Activated CD4-positive, alpha-beta memory T cell treated with anti-CD3 and anti-CD28 coated beads, Interleukin-2, amount 10 ng/mL, durations not matched to agents 7 days and 5 days (primary cell): ENCODE measurements at regions of chr17 and their contacts with region 1.

Region 1: GRCh38 chr17:28384281-28385036 is 13.0 kb downstream of the SARM1 start:
- DNase-seq: peak; percentile 80
- H3K4me3 Mint-ChIP-seq: peak overlapping the region; percentile 86
- H3K27ac Mint-ChIP-seq: peak overlapping the region; percentile 78
- H3K4me1 Mint-ChIP-seq: peaks cover 32% of the 10 kb centered on the region
- H3K27me3 Mint-ChIP-seq: no peaks in the 10 kb centered on the region

Region 2: DNA sequence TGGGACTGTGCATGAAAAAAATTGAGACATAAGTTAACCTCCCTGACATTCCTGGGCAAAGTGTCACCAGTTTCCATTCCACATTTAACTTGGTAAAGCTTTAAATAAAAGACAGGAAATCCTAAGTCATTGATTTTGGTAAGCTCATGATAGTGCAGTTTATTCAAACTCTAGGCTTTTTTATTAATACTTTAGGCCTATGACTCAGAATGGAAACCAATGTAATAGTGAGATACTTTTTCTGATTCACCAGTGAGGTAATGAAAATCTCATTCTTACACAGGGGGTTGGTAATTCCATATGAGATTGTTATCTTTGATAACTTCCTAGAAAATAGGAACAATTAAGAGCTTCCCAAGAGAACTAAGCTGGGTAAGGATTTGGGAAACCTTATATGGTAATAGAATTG is 250.9 kb before region 1 on chr17:
- CTCF ChIA-PET with region 1: no interaction called
- POLR2A ChIA-PET with region 1: no interaction called
- DNase-seq: no peak
- H3K4me3 Mint-ChIP-seq: no peak overlapping the region
- H3K27ac Mint-ChIP-seq: no peak overlapping the region
- H3K4me1 Mint-ChIP-seq: no peaks in the 10 kb centered on the region
- H3K27me3 Mint-ChIP-seq: no peaks in the 10 kb centered on the region

Region 3: DNA sequence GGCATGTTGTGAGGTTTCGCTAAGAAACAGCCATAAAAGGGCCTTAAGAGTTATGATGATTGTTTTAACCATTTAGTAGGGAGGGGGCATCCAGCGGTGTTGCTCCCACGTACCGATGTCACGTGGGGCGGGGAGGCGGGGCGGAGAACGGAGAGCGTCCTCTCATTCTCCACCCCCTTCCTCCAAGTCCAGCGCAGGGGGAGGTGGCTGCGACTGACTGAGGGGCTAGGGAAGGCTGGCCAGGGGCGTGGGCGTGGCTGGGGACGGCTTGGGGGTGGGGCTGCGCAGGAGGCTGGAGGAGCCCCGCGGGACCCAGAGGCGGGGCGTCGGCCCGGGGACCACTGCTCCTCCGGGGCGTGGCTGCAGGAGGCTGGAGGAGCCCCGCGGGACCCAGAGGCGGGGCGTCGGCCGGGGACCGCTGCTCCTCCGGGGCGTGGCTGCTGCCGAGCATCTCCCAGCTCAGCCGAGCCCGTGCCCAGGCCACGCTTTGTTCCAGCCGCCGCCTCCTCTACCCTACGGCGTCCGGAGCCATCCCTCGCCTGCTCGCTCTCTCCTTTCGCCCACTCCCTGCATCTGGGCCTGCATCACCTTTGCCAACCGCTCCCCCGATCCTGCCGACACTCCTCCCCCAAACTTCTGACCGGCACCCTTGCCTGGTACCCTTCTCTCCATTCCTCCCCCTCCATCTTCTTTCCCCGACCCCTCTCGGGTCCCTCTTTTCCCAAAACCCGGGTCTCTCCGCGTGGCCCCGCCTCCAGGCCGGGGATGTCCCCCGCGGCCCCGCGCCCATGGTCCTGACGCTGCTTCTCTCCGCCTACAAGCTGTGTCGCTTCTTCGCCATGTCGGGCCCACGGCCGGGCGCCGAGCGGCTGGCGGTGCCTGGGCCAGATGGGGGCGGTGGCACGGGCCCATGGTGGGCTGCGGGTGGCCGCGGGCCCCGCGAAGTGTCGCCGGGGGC is 12.9 kb before region 1 on chr17 and contains the start of gene SARM1:
- CTCF ChIA-PET with region 1: interaction called, 4 read pairs
- POLR2A ChIA-PET with region 1: interaction called, 43 read pairs
- DNase-seq: peak; percentile 90
- H3K4me3 Mint-ChIP-seq: peak within 1 kb of the TSS; percentile 90
- H3K27ac Mint-ChIP-seq: peak within 1 kb of the TSS; percentile 77
- H3K4me1 Mint-ChIP-seq: peaks cover 23% of the 10 kb centered on the region
- H3K27me3 Mint-ChIP-seq: no peaks in the 10 kb centered on the region
- total RNA-seq, gene SARM1: 17.2 to 17.5 TPM

Region 4: DNA sequence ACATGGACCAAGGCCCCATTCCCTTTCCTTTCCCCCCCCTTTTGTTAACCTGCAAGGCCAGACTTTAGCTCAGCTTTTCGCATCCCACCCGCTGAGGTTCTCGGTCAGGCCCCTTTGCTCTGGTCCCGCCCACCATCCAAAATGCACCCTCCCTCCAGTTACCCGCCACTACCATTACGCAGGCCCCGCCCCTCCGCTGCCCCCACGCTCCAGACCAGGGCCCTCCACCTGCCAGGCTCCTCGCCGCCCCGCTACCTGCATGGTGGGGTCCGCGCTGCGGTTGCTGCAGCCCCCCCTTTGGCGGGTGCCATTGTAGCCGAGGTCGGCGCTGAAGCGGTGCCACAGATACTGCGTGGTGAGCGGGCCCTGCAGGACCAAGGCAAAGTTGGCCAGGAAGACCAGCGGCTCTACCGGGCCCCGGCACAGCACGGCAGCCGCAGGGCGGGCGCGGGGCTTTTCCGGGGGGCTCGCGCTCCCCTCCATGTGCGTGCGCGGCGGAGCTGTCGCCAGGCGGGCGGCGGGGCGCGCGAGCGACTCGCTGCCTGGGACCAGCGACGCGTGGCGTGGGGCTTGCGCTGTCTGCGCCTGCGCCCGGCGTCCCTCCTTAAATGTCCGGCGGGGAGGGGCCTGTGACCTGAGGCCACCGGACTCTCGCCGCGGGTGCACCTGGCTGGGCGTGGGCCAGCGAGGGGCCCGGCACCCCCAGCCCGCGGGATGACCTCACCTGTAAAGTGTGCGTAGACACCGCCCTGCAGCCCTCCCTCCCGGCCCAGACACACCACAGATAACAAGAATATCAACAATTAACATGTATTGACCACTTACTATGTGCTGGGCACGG is 21.4 kb after region 1 on chr17 and contains the start of gene SLC46A1:
- CTCF ChIA-PET with region 1: interaction called, 3 read pairs
- POLR2A ChIA-PET with region 1: interaction called, 11 read pairs
- DNase-seq: peak; percentile 29
- H3K4me3 Mint-ChIP-seq: peak within 1 kb of the TSS; percentile 66
- H3K27ac Mint-ChIP-seq: no peak within 1 kb of the TSS
- H3K4me1 Mint-ChIP-seq: peaks cover 13% of the 10 kb centered on the region
- H3K27me3 Mint-ChIP-seq: peaks cover 11% of the 10 kb centered on the region
- total RNA-seq, gene SLC46A1: 0.96 to 1.1 TPM

Region 5: DNA sequence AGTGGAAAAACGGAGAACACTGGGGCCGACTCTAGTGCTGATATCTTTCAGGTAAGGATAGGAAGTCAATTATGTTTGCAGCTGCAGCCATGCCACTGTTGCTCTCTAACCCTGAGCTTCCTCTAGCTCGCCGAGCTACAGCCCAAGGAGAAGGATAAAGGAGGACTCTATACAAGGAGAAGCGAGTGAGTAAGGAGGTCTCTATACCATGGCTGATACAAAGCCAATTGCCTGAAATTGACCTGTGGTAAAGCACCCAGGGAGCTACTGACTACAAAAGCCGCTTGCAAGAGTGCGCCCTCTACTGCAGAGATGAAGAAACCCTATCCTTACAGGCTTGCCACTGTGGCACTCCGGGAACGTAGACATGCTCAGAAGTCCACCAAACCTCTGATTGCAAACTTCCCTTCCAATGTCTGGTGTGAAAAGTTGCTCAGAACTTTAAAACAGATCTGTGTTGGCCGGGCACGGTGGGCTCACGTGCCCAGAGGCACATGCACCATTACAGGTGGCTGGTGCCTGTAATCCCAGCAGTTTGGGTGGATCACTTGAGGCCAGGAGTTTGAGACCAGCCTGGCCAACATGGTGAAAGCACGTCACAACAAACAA is 32.3 kb after region 1 on chr17:
- CTCF ChIA-PET with region 1: interaction called, 12 read pairs
- POLR2A ChIA-PET with region 1: interaction called, 4 read pairs
- DNase-seq: peak; percentile 62
- H3K4me3 Mint-ChIP-seq: no peak overlapping the region
- H3K27ac Mint-ChIP-seq: no peak overlapping the region
- H3K4me1 Mint-ChIP-seq: no peaks in the 10 kb centered on the region
- H3K27me3 Mint-ChIP-seq: peaks cover 22% of the 10 kb centered on the region